Heart left ventricle (tissue), 16 donors: ENCODE measurements at regions of chr2 and their contacts with region 1.

Region 1: GRCh38 chr2:28219138-28219537 is 173.5 kb upstream of the FOSL2 start:
- DNase-seq: no peak
- ATAC-seq: no peak
- H3K4me3 ChIP-seq: no peak overlapping the region
- H3K27ac ChIP-seq: no peak overlapping the region
- H3K4me1 ChIP-seq: peaks cover 0 to 7% (median 0%) of the 10 kb centered on the region in 12 donors
- H3K27me3 ChIP-seq: no peaks in the 10 kb centered on the region
- CTCF ChIP-seq: no peak
- POLR2A ChIP-seq: no peak

Region 2: GRCh38 chr2:28185891-28186290 is 33.2 kb before region 1 on chr2:
- intact Hi-C with region 1: no loop called
- DNase-seq: no peak
- ATAC-seq: no peak
- H3K4me3 ChIP-seq: no peak overlapping the region
- H3K27ac ChIP-seq: no peak overlapping the region
- H3K4me1 ChIP-seq: no peaks in the 10 kb centered on the region
- H3K27me3 ChIP-seq: no peaks in the 10 kb centered on the region
- CTCF ChIP-seq: no peak
- POLR2A ChIP-seq: no peak

Region 3: GRCh38 chr2:28263690-28264089 is 44.6 kb after region 1 on chr2:
- intact Hi-C with region 1: loop called in 1 of 10 experiments (anchors 5 kb)
- DNase-seq: no peak
- ATAC-seq: no peak
- H3K4me3 ChIP-seq: no peak overlapping the region
- H3K27ac ChIP-seq: no peak overlapping the region
- H3K4me1 ChIP-seq: peaks cover 0 to 9% (median under 1%) of the 10 kb centered on the region in 12 donors
- H3K27me3 ChIP-seq: no peaks in the 10 kb centered on the region
- CTCF ChIP-seq: no peak
- POLR2A ChIP-seq: no peak